ENCODE measurements at regions of chr19 and their contacts with region 1.

Region 1: DNA sequence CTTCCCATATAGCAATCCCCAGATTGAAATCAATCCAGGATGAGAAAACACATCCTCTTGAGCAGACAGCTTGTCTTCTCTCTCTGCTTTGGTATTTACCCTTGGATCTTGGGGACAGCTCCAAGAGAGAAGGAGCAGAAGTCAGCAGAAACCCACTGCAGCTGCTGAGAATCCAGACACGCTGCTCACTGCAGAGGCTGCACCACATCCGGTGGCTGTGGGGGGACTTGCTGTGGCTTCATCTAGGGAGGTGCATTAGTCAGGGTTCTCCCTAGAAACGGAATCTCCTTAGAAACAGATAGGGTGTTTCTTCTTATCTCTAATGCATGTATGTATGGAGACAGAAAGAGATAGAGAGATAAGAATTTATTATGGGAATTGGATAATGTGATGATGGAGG is 2.7 kb downstream of the CYP4F12 start:
- DNase-seq: no peak
- ATAC-seq: no peak
- H3K4me3 ChIP-seq: no peak overlapping the region
- H3K27ac ChIP-seq: no peak overlapping the region
- H3K4me1 ChIP-seq: peaks cover 0 to 37% (median 7%) of the 10 kb centered on the region in 4 donors
- H3K27me3 ChIP-seq: no peaks in the 10 kb centered on the region
- CTCF ChIP-seq: no peak
- POLR2A ChIP-seq: no peak

Region 2: GRCh38 chr19:15779756-15780476 is 104.4 kb after region 1 on chr19:
- intact Hi-C with region 1: loop called in 1 of 2 experiments (anchors 5 kb)
- DNase-seq: peak; percentile 59 to 81 (median 78)
- ATAC-seq: peak; percentile 80 to 88 (median 86)
- H3K4me3 ChIP-seq: no peak overlapping the region
- H3K27ac ChIP-seq: no peak overlapping the region
- H3K4me1 ChIP-seq: peaks cover 0 to 11% (median 0%) of the 10 kb centered on the region in 4 donors
- H3K27me3 ChIP-seq: no peaks in the 10 kb centered on the region
- CTCF ChIP-seq: peak in 1 of 4 donors; percentile 17
- POLR2A ChIP-seq: no peak